Activated CD4-positive, alpha-beta memory T cell treated with anti-CD3 and anti-CD28 coated beads for 36 hours (primary cell): ENCODE measurements at regions of chr19 and their contacts with region 1.

Region 1: DNA sequence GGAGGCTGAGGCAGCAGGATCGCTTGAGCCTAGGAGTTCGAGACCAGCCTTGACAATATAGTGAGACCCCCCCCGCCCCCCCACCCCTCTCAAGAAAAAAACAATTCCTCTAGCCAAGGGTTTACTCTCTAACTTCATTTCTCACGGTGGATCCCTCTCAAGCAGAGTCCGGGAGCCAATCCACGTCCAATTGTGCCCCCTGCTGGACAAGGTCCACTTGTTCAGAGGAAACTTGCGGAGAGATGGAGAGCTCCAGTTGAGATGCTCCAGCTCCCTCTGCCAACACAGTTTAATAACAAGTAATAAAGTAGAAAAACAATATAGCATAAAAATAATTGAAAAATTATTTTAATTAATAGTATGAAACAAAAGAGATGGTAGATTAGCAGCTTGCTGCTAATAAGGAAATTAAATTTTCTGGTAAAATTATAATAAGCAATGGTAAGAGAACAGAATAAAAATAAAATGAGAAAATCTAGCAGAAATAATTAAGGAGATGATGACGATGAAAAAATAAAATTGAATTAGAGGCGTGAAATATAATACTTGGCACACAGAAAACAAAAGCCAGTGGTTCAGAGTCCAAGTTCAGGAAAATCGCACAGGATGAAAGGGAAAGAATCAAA is 14.5 kb upstream of the SIGLEC14 start:
- DNase-seq: peak; percentile 80
- H3K4me3 Mint-ChIP-seq: no peak overlapping the region
- H3K27ac Mint-ChIP-seq: no peak overlapping the region
- H3K4me1 Mint-ChIP-seq: peaks cover 5% of the 10 kb centered on the region
- H3K27me3 Mint-ChIP-seq: peaks cover 15% of the 10 kb centered on the region

Region 2: GRCh38 chr19:51338563-51339312 is 322.4 kb before region 1 on chr19:
- CTCF ChIA-PET with region 1: interaction called, 13 read pairs
- POLR2A ChIA-PET with region 1: no interaction called
- intact Hi-C with region 1: loop called (anchors 1 kb)
- DNase-seq: peak; percentile 92
- H3K4me3 Mint-ChIP-seq: peak overlapping the region; percentile 85
- H3K27ac Mint-ChIP-seq: no peak overlapping the region
- H3K4me1 Mint-ChIP-seq: peaks cover 15% of the 10 kb centered on the region
- H3K27me3 Mint-ChIP-seq: no peaks in the 10 kb centered on the region

Region 3: GRCh38 chr19:51514866-51515481 is 146.1 kb before region 1 on chr19:
- CTCF ChIA-PET with region 1: interaction called, 24 read pairs
- POLR2A ChIA-PET with region 1: no interaction called
- intact Hi-C with region 1: loop called (anchors 10 kb)
- DNase-seq: peak; percentile 28
- H3K4me3 Mint-ChIP-seq: no peak overlapping the region
- H3K27ac Mint-ChIP-seq: no peak overlapping the region
- H3K4me1 Mint-ChIP-seq: peaks cover 12% of the 10 kb centered on the region
- H3K27me3 Mint-ChIP-seq: peaks cover 25% of the 10 kb centered on the region

Region 4: GRCh38 chr19:51676566-51677083 is 15.5 kb after region 1 on chr19:
- CTCF ChIA-PET with region 1: interaction called, 40 read pairs
- POLR2A ChIA-PET with region 1: no interaction called
- intact Hi-C with region 1: no loop called
- DNase-seq: peak; percentile 36
- H3K4me3 Mint-ChIP-seq: no peak overlapping the region
- H3K27ac Mint-ChIP-seq: peak overlapping the region; percentile 73
- H3K4me1 Mint-ChIP-seq: peaks cover 9% of the 10 kb centered on the region
- H3K27me3 Mint-ChIP-seq: peaks cover 12% of the 10 kb centered on the region

Region 5: DNA sequence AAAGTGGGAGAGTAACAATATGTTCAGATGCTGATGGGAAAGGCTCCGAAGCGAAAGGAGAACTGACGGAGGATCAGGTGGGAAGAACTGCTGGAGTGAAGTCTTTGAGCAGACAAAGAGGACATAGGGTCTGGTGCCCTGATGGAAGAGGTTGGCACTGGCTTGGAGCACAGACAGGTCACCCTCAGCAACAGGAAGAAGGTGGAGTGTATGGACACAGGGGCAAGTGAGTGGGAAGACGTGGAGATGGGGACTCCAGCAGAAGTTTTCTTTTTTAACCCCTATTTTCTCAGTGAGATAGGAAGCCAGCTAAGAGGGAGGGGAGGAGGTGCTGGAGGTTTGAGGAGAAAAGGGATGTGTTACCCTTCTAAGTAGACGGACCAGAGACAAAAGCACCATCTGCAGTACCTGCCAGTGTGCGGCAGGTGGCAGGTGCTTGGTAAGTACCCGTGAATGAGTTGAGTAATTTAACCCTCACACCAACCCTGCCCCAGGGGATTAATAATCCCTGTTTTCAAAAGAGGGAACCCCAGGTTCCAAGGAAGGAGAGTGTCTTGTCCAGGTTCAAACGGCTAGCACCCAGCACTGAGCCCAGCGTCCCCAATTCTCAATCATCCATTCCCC is 51.5 kb after region 1 on chr19:
- CTCF ChIA-PET with region 1: no interaction called
- POLR2A ChIA-PET with region 1: no interaction called
- intact Hi-C with region 1: no loop called
- DNase-seq: peak; percentile 26
- H3K4me3 Mint-ChIP-seq: no peak overlapping the region
- H3K27ac Mint-ChIP-seq: no peak overlapping the region
- H3K4me1 Mint-ChIP-seq: no peaks in the 10 kb centered on the region
- H3K27me3 Mint-ChIP-seq: peaks cover 9% of the 10 kb centered on the region

Region 6: GRCh38 chr19:51799034-51799773 is 138.1 kb after region 1 on chr19:
- CTCF ChIA-PET with region 1: no interaction called
- POLR2A ChIA-PET with region 1: no interaction called
- intact Hi-C with region 1: no loop called
- DNase-seq: no peak
- H3K4me3 Mint-ChIP-seq: no peak overlapping the region
- H3K27ac Mint-ChIP-seq: no peak overlapping the region
- H3K4me1 Mint-ChIP-seq: no peaks in the 10 kb centered on the region
- H3K27me3 Mint-ChIP-seq: peaks cover 3% of the 10 kb centered on the region

Region 7: GRCh38 chr19:51887522-51888498 is 226.7 kb after region 1 on chr19 and contains the start of gene ZNF577:
- CTCF ChIA-PET with region 1: no interaction called
- POLR2A ChIA-PET with region 1: no interaction called
- intact Hi-C with region 1: no loop called
- DNase-seq: peak; percentile 67
- H3K4me3 Mint-ChIP-seq: peak within 1 kb of the TSS; percentile 80
- H3K27ac Mint-ChIP-seq: no peak within 1 kb of the TSS
- H3K4me1 Mint-ChIP-seq: no peaks in the 10 kb centered on the region
- H3K27me3 Mint-ChIP-seq: no peaks in the 10 kb centered on the region
- total RNA-seq, gene ZNF577: 4.1 to 5.3 TPM